Kidney (tissue), 22 donors: ENCODE measurements at regions of chr7 and their contacts with region 1.

Region 1: DNA sequence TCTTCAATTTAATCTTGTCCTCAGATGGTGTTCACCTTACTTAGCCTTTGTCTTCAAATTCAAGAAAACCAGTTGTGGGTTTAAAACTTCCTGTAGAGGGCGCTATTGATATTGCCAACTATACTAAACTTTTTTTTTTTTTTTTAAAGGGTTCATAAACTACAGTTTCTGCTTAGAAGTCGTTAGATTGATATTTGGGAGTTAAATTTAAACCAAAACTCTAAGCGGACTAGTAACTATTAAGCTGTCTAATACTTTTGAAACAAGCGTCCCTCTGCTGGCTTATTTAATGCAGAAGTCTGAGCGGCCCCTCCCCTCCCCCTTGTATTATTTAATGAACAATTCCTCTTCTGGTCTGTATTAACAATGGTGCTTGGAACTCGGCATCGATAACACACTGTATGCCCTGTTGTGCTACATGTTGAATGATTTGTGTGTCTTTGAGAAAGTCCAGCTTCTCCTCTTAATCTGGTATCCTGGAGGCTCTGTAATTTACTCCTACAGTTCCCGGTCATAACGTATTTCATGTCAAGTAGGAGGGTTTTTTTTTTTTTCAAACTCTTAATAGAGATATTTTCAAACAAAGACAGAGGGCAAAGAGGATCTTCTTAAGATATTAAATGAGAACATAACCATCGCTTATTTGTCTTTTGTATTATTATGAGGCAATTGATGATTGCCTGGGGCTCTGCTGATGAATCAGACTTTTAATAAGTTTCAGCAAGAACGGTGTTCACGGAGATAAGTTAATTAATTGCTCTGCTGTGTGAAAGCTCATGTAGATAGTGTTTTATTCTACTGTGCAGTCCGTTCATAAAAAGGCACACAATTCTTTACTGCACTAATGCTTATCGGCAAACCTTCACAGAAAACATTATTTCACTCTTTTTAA is 22.6 kb upstream of the CREB5 start:
- DNase-seq: peak in 3 of 5 donors; percentile 38 to 89 (median 89)
- H3K4me3 ChIP-seq: peak overlapping the region; percentile 36 to 55 (median 53)
- H3K27ac ChIP-seq: no peak overlapping the region
- H3K4me1 ChIP-seq: peaks cover 0 to 2% (median 0%) of the 10 kb centered on the region in 3 donors
- H3K27me3 ChIP-seq: no peaks in the 10 kb centered on the region
- CTCF ChIP-seq: peak; percentile 48

Region 2: GRCh38 chr7:28155019-28155660 is 234.6 kb before region 1 on chr7:
- intact Hi-C with region 1: no loop called
- DNase-seq: no peak
- H3K4me3 ChIP-seq: no peak overlapping the region
- H3K27ac ChIP-seq: no peak overlapping the region
- H3K4me1 ChIP-seq: no peaks in the 10 kb centered on the region
- H3K27me3 ChIP-seq: no peaks in the 10 kb centered on the region
- CTCF ChIP-seq: no peak

Region 3: GRCh38 chr7:28853834-28854749 is 464.3 kb after region 1 on chr7:
- intact Hi-C with region 1: loop called (anchors 10 kb)
- DNase-seq: peak; percentile 88 to 91 (median 89)
- H3K4me3 ChIP-seq: peak overlapping the region; percentile 42 to 73 (median 71)
- H3K27ac ChIP-seq: no peak overlapping the region
- H3K4me1 ChIP-seq: peaks cover 0 to 4% (median 0%) of the 10 kb centered on the region in 3 donors
- H3K27me3 ChIP-seq: no peaks in the 10 kb centered on the region
- CTCF ChIP-seq: peak; percentile 84